HEK293 (cell line): ENCODE measurements at regions of chr15 and their contacts with region 1.

Region 1: DNA sequence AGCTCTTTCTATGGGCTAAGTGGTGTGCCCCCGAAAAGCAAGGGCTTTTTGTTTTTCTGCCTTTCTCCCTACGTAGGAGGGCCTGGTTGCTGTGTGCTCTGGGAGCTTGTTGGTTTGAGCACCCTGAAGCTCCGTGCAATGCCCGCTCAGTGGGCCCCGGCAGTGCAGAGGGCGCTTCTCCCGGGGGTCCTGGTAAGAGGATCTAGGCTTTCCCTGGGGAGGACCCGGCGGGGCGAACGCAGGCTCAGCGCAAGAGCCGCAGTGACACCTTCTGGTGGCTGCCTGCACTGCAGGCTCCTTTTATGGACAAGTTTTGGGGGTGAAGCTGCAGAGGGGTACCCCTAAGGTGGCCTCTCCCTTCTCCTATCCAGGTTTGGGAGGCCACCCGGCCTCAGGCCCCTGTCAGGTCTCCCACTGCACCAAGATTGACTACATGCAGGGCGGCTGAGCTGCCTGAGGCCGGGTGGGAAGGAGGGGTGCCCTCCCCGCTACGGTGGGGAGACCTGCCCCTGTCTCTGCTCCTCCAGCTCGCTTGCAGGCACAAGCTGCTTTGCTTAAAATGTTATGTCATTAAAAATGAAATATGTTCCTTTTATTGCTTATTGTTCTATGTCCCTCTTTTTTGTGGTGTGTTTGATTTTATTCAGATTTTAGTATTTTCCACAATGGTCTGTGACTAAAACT is 387.9 kb downstream of the GABRG3 start:
- H3K4me3 ChIP-seq: no peak overlapping the region
- H3K27ac ChIP-seq: no peak overlapping the region
- H3K4me1 ChIP-seq: no peaks in the 10 kb centered on the region
- CTCF ChIP-seq: no peak

Region 2: DNA sequence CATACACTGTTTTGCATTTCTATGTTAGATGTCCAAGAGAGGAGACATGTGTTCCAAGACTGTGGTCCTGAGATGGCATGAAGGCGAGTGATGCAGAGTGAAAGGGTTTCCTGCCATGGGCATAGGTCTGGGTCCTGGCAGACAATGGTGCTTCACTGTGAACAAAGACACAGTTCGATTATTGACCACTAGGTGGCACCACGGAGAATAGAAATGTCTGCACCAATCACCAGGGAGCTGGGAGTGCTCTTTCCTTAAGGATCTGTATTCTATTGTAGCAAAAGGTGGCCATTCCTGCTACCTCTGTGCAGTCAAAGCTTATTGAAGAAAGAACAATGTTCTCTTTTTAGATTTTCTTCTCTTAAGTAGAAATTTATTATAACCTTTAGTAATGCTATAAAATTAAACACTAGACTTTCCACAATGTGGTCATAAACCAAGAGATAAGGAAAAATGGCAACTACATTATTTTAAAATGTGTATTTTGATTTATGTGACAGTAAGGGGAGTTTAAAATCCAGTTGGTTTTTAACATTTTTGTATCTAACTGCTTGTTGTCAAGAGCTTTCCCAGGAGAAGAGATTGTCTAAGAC is 299.2 kb before region 1 on chr15:
- CTCF ChIA-PET with region 1: interaction called, 16 read pairs
- POLR2A ChIA-PET with region 1: no interaction called
- H3K4me3 ChIP-seq: no peak overlapping the region
- H3K27ac ChIP-seq: no peak overlapping the region
- H3K4me1 ChIP-seq: no peaks in the 10 kb centered on the region
- CTCF ChIP-seq: no peak

Region 3: DNA sequence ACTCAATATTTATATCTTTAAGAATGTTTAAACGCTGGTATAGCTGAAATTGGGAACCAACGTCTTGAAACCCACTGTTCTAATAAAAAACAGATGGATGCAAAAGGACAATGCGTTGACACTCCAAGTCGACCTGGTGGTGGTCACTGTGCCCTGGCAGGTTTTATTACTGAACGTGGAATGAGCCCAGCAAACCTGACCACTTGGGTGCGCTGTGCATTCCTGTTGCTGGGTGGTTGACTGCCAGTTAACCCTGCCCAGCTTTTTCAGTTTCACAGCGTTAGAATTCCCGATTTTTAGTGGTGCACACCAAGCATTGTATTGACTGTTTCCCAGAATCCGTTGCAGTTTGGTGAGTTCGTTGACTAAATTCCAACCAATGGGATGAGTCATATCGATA is 355.8 kb after region 1 on chr15:
- CTCF ChIA-PET with region 1: no interaction called
- POLR2A ChIA-PET with region 1: no interaction called
- H3K4me3 ChIP-seq: no peak overlapping the region
- H3K27ac ChIP-seq: no peak overlapping the region
- H3K4me1 ChIP-seq: no peaks in the 10 kb centered on the region
- CTCF ChIP-seq: no peak